ENCODE measurements at regions of chr13 and their contacts with region 1.

Region 1: GRCh38 chr13:49190901-49191300 is 29.2 kb upstream of the MLNR start:
- DNase-seq: no peak
- ATAC-seq: no peak
- H3K4me3 ChIP-seq: no peak overlapping the region
- H3K4me3 Mint-ChIP-seq: no peak overlapping the region
- H3K27ac ChIP-seq: no peak overlapping the region
- H3K27ac Mint-ChIP-seq: no peak overlapping the region
- H3K4me1 ChIP-seq: no peaks in the 10 kb centered on the region
- H3K4me1 Mint-ChIP-seq: no peaks in the 10 kb centered on the region
- H3K27me3 ChIP-seq: no peaks in the 10 kb centered on the region
- H3K27me3 Mint-ChIP-seq: no peaks in the 10 kb centered on the region
- CTCF ChIP-seq: no peak

Region 2: DNA sequence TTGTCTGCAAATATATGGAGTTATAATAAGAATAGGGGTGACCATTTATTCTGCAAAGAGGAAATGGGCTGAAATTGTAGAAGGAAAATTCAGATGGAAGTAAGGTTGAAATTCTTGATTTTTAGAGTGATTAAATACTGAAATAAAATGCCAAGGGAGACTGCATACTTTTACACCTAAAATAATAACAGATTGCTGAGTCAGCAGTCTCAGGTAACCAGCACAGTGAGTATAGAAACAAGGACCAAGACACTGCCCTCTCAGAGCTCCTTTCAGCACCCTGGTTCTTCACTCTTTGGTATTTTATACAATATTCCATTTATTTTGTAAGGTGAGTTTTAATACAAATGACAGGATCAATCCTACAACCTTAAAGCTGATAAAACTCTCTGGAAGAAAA is 19.5 kb before region 1 on chr13:
- CTCF ChIA-PET with region 1: no interaction called
- POLR2A ChIA-PET with region 1: no interaction called
- intact Hi-C with region 1: loop called in 1 of 2 experiments (anchors 1 kb)
- DNase-seq: no peak
- ATAC-seq: no peak
- H3K4me3 ChIP-seq: no peak overlapping the region
- H3K4me3 Mint-ChIP-seq: no peak overlapping the region
- H3K27ac ChIP-seq: no peak overlapping the region
- H3K27ac Mint-ChIP-seq: no peak overlapping the region
- H3K4me1 ChIP-seq: no peaks in the 10 kb centered on the region
- H3K4me1 Mint-ChIP-seq: no peaks in the 10 kb centered on the region
- H3K27me3 ChIP-seq: no peaks in the 10 kb centered on the region
- H3K27me3 Mint-ChIP-seq: no peaks in the 10 kb centered on the region
- CTCF ChIP-seq: no peak

Region 3: DNA sequence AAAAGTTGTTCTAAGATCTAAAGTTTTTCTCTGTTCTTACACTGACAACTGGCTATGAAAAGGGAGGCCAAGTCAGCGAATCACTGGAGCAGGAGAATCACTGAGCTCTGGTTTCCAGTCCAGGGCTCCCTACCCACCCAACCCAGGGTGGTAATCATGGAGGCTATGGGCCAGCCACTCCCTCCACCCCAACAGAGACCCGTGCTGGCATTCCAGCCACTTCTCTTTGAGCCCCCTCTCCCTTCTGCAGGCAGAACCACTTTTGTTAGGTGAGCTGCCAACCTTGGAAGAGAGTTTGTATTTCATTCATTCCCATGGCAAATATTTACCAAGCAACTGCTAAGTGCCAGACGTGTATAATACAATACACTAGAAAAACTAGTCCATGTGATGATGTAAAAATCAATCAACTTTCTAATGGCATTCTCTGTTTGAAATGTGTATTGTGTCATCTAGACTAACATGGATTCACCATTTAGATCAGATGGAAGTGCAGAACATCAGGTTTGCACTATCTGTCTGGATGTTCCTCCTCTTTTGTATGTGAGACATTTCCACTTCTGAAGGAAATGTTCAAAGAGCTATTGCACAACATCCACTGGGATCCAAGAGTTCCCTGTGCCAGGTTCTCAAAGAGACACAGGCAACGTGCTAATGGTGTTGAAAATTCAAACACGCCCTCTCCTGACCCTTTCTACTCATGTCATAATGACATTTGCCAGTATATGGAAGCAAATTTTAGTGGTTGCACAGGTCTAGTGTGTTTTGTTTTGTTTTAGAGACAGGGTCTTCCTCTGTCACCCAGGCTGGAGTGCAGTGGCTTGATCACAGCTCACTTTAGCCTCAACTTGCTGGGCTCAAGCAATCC is 34.6 kb after region 1 on chr13:
- CTCF ChIA-PET with region 1: no interaction called
- POLR2A ChIA-PET with region 1: no interaction called
- intact Hi-C with region 1: no loop called
- DNase-seq: no peak
- ATAC-seq: no peak
- H3K4me3 ChIP-seq: no peak overlapping the region
- H3K4me3 Mint-ChIP-seq: no peak overlapping the region
- H3K27ac ChIP-seq: no peak overlapping the region
- H3K27ac Mint-ChIP-seq: no peak overlapping the region
- H3K4me1 ChIP-seq: peaks cover 3% of the 10 kb centered on the region
- H3K4me1 Mint-ChIP-seq: peaks cover 4% of the 10 kb centered on the region
- H3K27me3 ChIP-seq: peaks cover 22 to 28% of the 10 kb centered on the region in 2 experiments
- H3K27me3 Mint-ChIP-seq: peaks cover 44% of the 10 kb centered on the region
- CTCF ChIP-seq: no peak